HepG2 (cell line): ENCODE measurements at regions of chr7 and their contacts with region 1.

Region 1: DNA sequence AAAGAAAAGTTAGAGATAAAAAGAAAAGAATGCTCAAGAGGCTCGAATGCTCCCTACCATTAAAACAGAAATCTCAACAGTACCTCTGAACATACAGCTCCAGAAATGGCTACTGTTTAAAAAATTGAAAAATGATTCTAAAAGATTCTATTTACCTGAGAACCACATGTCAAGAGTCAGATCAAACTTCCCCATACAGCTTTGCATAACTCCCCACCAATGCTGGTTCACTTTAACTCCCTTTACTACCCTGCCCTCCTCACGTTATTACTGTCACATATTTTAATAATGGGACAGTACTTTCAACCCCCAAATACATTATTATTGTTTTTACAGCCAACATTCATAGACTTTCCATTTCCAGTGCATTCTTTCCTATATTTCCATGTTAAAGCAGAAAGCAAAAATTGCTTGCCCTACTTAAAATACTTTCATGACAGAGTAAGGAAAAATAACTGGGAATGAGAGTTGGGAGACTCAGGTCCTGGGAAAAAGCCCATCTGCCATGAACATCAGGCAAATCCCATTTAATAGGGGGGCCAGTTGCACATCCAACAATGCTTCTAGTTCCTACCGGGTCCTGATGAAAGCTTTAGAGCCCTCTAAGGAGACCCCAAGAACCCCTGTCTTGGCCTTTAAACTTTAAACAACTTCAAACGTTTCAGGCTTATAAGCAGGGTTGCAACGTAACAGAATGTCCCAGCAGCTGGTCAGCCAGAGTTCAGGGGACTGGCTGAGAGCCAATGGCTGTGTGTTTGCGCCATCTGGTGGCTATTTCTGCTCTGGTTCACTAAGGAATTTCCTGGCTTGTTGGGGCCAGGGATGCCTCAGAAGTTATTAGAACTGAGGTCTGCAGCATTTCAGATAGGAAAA is 247.4 kb downstream of the ELMO1 start:
- DNase-seq: peak; percentile 64
- ATAC-seq: peak; percentile 83
- H3K4me3 ChIP-seq: no peak overlapping the region
- H3K27ac ChIP-seq: no peak overlapping the region
- H3K4me1 ChIP-seq: peaks cover 45% of the 10 kb centered on the region
- H3K27me3 ChIP-seq: no peaks in the 10 kb centered on the region
- CTCF ChIP-seq: peak; percentile 94
- EP300 ChIP-seq: no peak
- POLR2A ChIP-seq: no peak
- RAD21 ChIP-seq: peak; percentile 86

Region 2: DNA sequence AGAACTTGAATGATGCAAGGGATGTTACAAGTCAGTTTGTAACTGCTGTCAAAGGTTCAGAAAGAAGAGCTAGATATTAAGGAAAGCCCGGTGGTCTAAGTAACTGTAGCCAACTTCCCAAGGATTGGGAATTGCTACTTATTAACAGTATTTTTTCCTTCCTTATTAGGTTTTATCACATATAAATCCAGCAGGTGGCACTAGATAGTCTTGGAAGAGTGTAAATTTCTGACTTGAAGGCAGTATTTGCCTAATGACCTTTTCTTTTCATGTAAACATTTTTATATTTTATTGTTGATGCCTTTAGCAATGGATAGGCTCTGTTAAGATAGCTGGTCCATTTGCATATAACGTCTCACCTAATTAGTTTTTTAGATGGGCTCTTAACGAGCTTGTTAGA is 760.4 kb before region 1 on chr7:
- CTCF ChIA-PET with region 1: interaction called, 16 read pairs
- POLR2A ChIA-PET with region 1: no interaction called
- in situ Hi-C with region 1: no loop called
- intact Hi-C with region 1: loop called (anchors 1 kb)
- DNase-seq: peak; percentile 16
- ATAC-seq: no peak
- H3K4me3 ChIP-seq: no peak overlapping the region
- H3K27ac ChIP-seq: no peak overlapping the region
- H3K4me1 ChIP-seq: peaks cover 25% of the 10 kb centered on the region
- H3K27me3 ChIP-seq: no peaks in the 10 kb centered on the region
- CTCF ChIP-seq: peak; percentile 27; the same call in 1 of the 2 replicates
- EP300 ChIP-seq: no peak
- POLR2A ChIP-seq: no peak
- RAD21 ChIP-seq: no peak

Region 3: GRCh38 chr7:36487756-36488336 is 713.4 kb before region 1 on chr7:
- CTCF ChIA-PET with region 1: interaction called, 51 read pairs
- POLR2A ChIA-PET with region 1: no interaction called
- in situ Hi-C with region 1: loop called (anchors 5 kb)
- intact Hi-C with region 1: loop called (anchors 1 kb)
- DNase-seq: peak; percentile 39
- ATAC-seq: peak; percentile 26; the same call in 1 of the 3 replicates
- H3K4me3 ChIP-seq: no peak overlapping the region
- H3K27ac ChIP-seq: no peak overlapping the region
- H3K4me1 ChIP-seq: no peaks in the 10 kb centered on the region
- H3K27me3 ChIP-seq: no peaks in the 10 kb centered on the region
- CTCF ChIP-seq: peak; percentile 80
- EP300 ChIP-seq: no peak
- POLR2A ChIP-seq: no peak
- RAD21 ChIP-seq: peak; percentile 78

Region 4: DNA sequence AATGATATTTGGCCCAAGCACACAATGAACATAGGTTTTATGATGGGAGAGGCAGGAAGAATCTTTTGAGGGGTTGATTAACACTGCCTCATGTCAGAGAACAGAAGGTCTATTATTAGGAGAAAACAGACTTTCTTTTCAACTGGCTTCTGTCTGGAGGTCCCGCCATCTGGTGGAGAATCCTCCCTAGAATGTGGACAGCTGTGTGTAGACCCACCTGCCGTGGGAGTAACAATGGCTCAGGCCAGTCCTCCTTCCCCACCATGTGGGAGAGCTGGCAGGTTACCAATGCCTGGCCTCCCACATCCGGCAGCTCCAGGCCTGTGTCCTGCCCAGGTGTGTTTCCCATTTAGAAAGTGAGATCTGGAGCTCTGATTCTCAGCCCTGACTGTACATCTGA is 406.6 kb before region 1 on chr7:
- CTCF ChIA-PET with region 1: no interaction called
- POLR2A ChIA-PET with region 1: no interaction called
- in situ Hi-C with region 1: no loop called
- intact Hi-C with region 1: loop called (anchors 1 kb)
- DNase-seq: peak; percentile 52
- ATAC-seq: peak; percentile 73
- H3K4me3 ChIP-seq: peak overlapping the region in 1 of 3 experiments; percentile 30; a peak in 2 of 6 replicates
- H3K27ac ChIP-seq: peak overlapping the region; percentile 72
- H3K4me1 ChIP-seq: peaks cover 44% of the 10 kb centered on the region
- H3K27me3 ChIP-seq: no peaks in the 10 kb centered on the region; a peak in 1 of 5 replicates
- CTCF ChIP-seq: peak; percentile 62
- EP300 ChIP-seq: no peak
- POLR2A ChIP-seq: no peak
- RAD21 ChIP-seq: no peak

Region 5: GRCh38 chr7:37181550-37181932 is 19.7 kb before region 1 on chr7:
- CTCF ChIA-PET with region 1: interaction called, 3 read pairs
- POLR2A ChIA-PET with region 1: interaction called, 3 read pairs
- in situ Hi-C with region 1: no loop called
- intact Hi-C with region 1: loop called (anchors 1 kb)
- DNase-seq: no peak
- ATAC-seq: no peak
- H3K4me3 ChIP-seq: no peak overlapping the region
- H3K27ac ChIP-seq: no peak overlapping the region
- H3K4me1 ChIP-seq: peaks cover 41% of the 10 kb centered on the region
- H3K27me3 ChIP-seq: no peaks in the 10 kb centered on the region
- CTCF ChIP-seq: no peak
- EP300 ChIP-seq: no peak
- POLR2A ChIP-seq: no peak
- RAD21 ChIP-seq: no peak

Region 6: DNA sequence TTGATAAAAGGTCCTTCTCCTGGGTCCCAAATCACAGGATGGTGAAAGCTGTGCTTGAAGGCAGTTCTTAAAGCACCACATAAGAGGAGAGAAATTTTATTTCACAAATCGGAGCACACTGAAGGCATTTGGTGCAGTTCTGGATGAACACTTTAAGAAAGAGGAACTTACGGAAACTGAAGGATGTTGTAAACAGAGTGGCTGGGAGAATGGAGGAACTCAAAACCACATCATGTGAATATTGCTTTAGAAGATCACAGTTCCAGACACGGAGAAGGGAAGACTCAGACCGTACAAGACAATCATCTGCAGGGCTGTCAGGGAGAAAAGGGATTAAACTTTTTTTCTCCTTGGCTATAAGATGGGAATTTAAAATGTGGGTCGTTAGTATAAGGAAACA is 473.3 kb after region 1 on chr7:
- CTCF ChIA-PET with region 1: no interaction called
- POLR2A ChIA-PET with region 1: no interaction called
- in situ Hi-C with region 1: no loop called
- intact Hi-C with region 1: no loop called
- DNase-seq: no peak
- ATAC-seq: no peak
- H3K4me3 ChIP-seq: no peak overlapping the region
- H3K27ac ChIP-seq: no peak overlapping the region
- H3K4me1 ChIP-seq: no peaks in the 10 kb centered on the region
- H3K27me3 ChIP-seq: no peaks in the 10 kb centered on the region; a peak in 1 of 5 replicates
- CTCF ChIP-seq: no peak
- EP300 ChIP-seq: no peak
- POLR2A ChIP-seq: no peak
- RAD21 ChIP-seq: no peak